HEK293 (cell line): ENCODE measurements at regions of chr5 and their contacts with region 1.

Region 1: GRCh38 chr5:136249678-136250266 is 56.8 kb upstream of the SMIM32 start:
- H3K4me3 ChIP-seq: no peak overlapping the region
- H3K27ac ChIP-seq: no peak overlapping the region
- H3K4me1 ChIP-seq: no peaks in the 10 kb centered on the region
- CTCF ChIP-seq: peak; percentile 77

Region 2: DNA sequence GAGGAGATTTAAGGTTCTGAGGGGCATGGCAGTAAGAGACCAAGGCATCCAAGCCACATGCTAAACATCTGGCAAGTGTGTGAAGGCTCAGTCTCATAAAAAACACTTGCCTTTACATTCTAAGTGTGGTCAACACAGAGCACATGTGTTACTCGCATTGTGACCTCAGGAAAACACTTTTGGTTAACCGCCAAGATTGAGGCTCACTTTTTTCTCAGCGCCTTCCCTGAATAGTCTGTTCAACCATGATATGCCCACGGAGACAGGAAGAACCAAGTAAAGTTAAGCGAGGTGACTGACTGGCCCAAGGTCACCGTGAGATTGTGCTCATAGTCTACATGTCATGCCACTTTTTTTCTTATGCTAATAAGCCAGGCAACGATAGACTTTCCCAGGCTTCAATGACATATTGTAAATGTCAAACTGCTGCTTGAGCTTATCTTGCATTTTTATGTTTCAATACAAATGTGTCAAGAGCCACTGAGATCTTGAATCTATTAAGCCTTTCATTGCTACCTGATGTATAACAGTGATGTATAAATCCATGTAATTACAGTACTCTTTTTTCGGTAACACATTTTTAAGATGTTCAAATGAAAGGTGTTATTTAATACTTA is 333.0 kb before region 1 on chr5:
- CTCF ChIA-PET with region 1: no interaction called
- POLR2A ChIA-PET with region 1: no interaction called
- H3K4me3 ChIP-seq: no peak overlapping the region
- H3K27ac ChIP-seq: no peak overlapping the region
- H3K4me1 ChIP-seq: 0 out of 2 replicates have a peak, but pooled peaks cover 6% of the 10 kb centered on the region
- CTCF ChIP-seq: no peak

Region 3: GRCh38 chr5:136269973-136270372 is 20.2 kb after region 1 on chr5:
- CTCF ChIA-PET with region 1: interaction called, 16 read pairs
- POLR2A ChIA-PET with region 1: no interaction called
- H3K4me3 ChIP-seq: no peak overlapping the region
- H3K27ac ChIP-seq: no peak overlapping the region
- H3K4me1 ChIP-seq: no peaks in the 10 kb centered on the region
- CTCF ChIP-seq: no peak

Region 4: GRCh38 chr5:136275601-136276000 is 25.8 kb after region 1 on chr5:
- CTCF ChIA-PET with region 1: interaction called, 12 read pairs
- POLR2A ChIA-PET with region 1: no interaction called
- H3K4me3 ChIP-seq: no peak overlapping the region
- H3K27ac ChIP-seq: no peak overlapping the region
- H3K4me1 ChIP-seq: peaks cover 6% of the 10 kb centered on the region
- CTCF ChIP-seq: no peak

Region 5: DNA sequence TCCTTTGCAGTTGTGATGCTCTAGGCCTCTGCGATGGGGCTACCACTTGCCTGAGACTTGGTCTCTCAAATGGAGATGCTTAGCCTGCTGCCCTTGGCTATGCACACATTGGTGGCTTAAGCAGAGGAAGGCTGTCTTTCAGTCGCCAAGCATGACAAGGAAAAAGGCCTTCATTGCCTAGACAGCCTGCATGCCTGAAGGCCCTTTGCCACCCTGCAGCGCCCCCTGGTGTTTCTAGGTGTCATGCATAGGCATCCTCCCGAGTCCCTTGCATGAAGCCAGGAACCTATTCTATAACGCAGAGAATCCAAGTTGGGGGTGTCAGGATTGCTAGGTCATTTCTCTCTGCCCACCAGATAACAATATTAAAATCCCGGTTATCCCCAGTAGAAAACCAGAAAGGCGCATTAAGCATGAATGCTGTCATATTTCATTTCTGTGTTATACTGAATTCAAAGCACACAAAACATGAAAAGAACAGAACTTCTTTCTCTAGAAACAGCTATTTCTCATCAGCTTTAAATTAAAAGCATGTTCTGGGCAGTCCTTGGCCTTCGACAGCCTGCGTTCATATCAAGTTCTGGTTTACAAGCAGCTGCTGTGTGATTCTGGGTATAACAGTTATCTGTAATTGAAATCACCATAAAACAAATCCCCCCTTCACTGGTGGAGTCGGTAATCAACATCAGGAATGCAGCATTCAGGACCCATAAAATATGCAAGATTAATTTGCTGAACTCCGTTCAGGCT is 175.2 kb after region 1 on chr5:
- CTCF ChIA-PET with region 1: interaction called, 14 read pairs
- POLR2A ChIA-PET with region 1: no interaction called
- H3K4me3 ChIP-seq: no peak overlapping the region
- H3K27ac ChIP-seq: no peak overlapping the region
- H3K4me1 ChIP-seq: peaks cover 17% of the 10 kb centered on the region
- CTCF ChIP-seq: peak; percentile 85

Region 6: DNA sequence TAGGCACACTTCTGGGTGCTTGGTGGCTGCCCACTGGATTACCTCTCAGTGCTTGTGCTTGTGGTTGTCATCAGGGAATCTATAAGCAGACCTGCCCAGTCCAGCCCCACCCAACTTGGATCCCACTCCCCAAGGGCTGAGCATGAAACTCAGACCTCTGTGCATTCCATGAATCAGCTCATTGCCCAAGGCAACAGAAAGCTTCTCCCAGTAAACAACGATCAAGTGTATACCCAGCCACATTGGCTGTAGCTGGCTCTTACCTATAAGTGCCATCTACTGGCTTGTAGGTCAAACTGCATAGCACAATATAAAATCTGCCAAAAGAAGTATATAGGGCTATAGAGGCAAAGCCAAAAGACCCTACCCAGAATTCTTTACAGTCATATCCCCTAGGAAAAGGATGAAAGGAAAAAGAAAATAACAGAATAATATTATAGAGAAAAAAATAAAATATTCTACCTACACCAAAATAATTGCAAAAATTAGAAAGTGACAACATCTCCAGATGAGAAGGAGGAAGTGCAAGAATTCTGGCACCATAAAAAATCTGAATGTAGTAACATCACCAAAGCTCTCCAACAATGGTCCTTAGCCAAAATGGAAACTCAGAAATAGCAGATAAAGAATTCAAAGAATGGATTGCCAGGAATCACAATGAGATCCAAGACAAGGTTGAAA is 436.6 kb after region 1 on chr5:
- CTCF ChIA-PET with region 1: interaction called, 15 read pairs
- POLR2A ChIA-PET with region 1: no interaction called
- H3K4me3 ChIP-seq: no peak overlapping the region
- H3K27ac ChIP-seq: no peak overlapping the region
- H3K4me1 ChIP-seq: peaks cover 3% of the 10 kb centered on the region; the same call in 1 of the 2 replicates
- CTCF ChIP-seq: peak; percentile 20; the same call in 1 of the 2 replicates

Region 7: DNA sequence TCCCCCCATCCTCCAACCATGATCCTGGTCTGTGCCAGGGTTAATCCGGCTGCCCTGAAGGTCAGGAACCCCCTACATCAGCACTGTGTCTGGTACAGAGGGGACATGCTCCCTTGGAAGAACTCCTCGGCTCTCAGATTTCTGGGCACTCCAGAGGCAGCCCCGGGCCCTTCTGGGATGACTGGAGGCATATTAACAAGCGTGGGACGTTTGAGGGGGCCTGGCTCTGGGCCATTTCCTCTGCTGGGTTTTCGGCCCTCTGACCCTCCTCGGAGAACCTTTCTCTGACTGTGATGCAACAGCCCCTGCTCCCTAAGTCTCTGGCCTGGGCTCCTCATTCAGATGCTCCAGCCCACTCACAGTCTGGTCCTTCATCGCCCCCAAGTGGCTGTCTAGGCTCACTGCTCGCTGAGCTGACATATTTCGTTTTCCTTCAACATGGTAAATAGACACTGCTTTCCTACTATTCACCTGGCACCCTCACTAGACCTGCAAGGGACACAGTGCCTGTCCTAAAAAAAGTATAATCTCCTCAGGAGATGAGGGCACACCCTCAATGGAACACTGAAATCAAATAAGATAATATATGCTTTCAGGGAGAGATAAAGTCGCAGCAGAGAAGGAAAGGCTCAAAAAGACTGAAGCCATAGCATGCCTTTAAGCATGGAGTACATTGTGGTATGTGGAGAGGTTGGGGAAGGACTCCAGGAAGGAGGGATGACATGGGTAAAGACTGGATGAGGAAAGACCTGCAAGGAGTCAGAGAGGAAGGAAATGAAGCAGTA is 520.3 kb after region 1 on chr5:
- CTCF ChIA-PET with region 1: interaction called, 41 read pairs
- POLR2A ChIA-PET with region 1: no interaction called
- H3K4me3 ChIP-seq: no peak overlapping the region
- H3K27ac ChIP-seq: no peak overlapping the region; the same call in 1 of the 2 replicates
- H3K4me1 ChIP-seq: 0 out of 2 replicates have a peak, but pooled peaks cover 2% of the 10 kb centered on the region
- CTCF ChIP-seq: peak; percentile 86